ENCODE measurements at regions of chr14 and their contacts with region 1.

Region 1: DNA sequence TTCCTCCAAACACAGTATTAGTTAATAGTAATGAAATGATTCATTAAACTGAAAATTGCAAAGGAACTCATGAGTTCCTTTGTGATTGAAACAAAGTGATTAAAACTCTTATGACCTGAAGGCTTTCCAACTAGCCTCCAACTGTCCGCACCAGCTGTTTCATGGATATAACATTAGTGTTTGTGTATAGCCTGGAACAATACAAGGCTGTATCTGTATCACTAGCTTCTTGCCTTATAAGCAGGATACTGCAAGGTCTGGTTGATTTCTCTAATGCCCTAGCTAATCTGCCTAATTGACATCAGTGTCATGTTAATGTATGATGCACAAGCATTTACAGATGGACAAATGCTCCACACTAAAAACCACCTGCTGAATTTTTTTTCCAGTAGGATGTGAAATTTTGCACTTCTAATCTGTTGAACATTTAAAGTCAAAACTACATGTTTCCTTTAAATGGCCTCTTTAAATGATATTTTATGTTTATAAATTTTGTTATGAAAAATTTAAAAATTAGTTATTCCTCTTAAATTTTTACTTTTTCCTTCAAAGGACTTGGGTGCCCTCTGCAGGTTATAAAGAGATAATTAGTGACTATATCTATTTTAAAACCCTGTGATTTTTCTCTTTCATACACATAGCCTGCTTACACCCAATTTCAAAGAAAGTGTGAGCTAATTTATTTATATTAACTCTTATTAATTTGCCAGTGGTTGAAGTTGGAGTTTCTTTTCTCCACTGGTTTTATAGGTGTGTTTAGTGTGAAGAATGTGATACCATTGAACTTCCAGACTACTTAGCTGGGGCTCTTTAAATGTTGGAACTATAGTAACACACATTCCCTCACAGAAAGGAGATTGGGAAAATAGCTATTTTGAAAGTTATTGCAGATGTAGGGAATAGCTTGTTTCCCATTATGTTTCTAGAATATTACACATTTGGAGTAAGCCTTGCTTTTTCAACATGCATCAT is 25.4 kb downstream of the AP5M1 start:
- DNase-seq: peak in 2 of 9 donors; percentile 2 to 7
- ATAC-seq: no peak
- H3K4me3 ChIP-seq: no peak overlapping the region
- H3K4me3 Mint-ChIP-seq: no peak overlapping the region
- H3K27ac ChIP-seq: no peak overlapping the region
- H3K27ac Mint-ChIP-seq: no peak overlapping the region
- H3K4me1 ChIP-seq: no peaks in the 10 kb centered on the region
- H3K4me1 Mint-ChIP-seq: no peaks in the 10 kb centered on the region
- H3K27me3 ChIP-seq: no peaks in the 10 kb centered on the region
- H3K27me3 Mint-ChIP-seq: no peaks in the 10 kb centered on the region

Region 2: GRCh38 chr14:57209561-57209960 is 84.6 kb before region 1 on chr14:
- CTCF ChIA-PET with region 1: no interaction called
- POLR2A ChIA-PET with region 1: no interaction called
- intact Hi-C with region 1: loop called in 1 of 2 experiments (anchors 5 kb)
- DNase-seq: no peak
- ATAC-seq: no peak
- H3K4me3 ChIP-seq: no peak overlapping the region
- H3K4me3 Mint-ChIP-seq: no peak overlapping the region
- H3K27ac ChIP-seq: no peak overlapping the region
- H3K27ac Mint-ChIP-seq: no peak overlapping the region
- H3K4me1 ChIP-seq: no peaks in the 10 kb centered on the region
- H3K4me1 Mint-ChIP-seq: no peaks in the 10 kb centered on the region
- H3K27me3 ChIP-seq: no peaks in the 10 kb centered on the region
- H3K27me3 Mint-ChIP-seq: no peaks in the 10 kb centered on the region